Posterior vena cava (tissue), 2 donors: ENCODE measurements at regions of chr11 and their contacts with region 1.

Region 1: DNA sequence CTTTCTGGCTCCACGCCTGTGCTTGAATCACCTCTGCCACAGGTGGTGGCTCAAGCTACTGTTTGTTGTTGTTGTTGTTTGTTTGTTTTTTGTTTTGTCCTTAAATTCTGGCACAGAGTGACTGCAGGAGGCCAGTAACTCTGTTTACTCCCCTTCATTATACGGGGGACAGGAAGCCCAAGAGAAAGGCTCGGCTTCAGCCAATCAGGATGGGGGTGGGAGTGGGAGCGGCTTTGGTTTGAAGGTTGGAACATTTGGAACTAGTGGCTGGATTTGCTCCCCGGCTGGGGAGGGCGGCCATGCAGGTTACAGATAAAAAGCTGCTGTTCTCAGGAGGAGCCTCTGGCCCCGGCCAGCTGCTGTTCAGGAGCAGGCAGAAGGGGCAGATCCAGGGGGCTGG is 19.7 kb upstream of the CABP2 start:
- DNase-seq: no peak

Region 2: GRCh38 chr11:67563354-67564114 is 20.6 kb after region 1 on chr11:
- intact Hi-C with region 1: loop called in 1 of 2 experiments (anchors 1 kb)
- DNase-seq: peak; percentile 83